ENCODE measurements at regions of chr10 and their contacts with region 1.

Region 1: DNA sequence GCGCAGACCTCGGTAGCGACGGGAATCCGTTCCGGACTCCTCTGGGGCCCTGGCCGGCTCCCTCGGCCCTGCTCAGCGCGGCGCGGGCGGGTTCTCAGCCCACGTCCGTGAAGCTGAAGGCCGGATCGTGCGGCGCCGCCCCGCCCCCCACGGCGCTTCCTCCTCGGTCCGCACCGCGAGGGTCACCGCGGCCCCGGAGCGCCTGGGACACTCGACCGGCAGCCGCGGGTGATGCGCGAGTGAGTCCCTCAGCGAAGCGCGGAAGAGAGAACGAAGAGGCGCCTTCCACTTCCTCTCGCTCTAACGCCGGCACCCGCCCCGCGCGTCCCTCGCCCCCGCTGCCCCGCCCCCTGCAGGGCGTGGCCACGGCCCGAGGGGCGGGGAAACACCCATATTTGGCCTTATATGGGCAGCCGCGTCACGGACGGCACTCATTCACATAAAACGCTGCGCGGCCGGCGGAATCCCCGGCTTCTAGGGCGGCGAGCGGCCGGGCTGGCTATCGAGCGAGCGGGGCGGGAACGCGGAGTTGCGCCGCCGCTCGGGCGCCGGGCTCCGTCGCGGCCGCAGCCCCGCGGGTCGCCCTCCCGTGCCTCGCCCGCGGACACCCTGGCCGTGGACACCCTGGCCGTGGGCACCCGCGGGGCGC is at the start of gene DUSP5:
- DNase-seq: peak; percentile 83 to 97
- H3K4me3 ChIP-seq: peak within 1 kb of the TSS; percentile 77
- H3K27ac ChIP-seq: peak within 1 kb of the TSS; percentile 89 to 93
- H3K4me1 ChIP-seq: peaks cover 0 to 22% of the 10 kb centered on the region in 2 donors
- H3K27me3 ChIP-seq: no peaks in the 10 kb centered on the region
- CTCF ChIP-seq: no peak
- total RNA-seq, gene DUSP5: 26.9 TPM

Region 2: DNA sequence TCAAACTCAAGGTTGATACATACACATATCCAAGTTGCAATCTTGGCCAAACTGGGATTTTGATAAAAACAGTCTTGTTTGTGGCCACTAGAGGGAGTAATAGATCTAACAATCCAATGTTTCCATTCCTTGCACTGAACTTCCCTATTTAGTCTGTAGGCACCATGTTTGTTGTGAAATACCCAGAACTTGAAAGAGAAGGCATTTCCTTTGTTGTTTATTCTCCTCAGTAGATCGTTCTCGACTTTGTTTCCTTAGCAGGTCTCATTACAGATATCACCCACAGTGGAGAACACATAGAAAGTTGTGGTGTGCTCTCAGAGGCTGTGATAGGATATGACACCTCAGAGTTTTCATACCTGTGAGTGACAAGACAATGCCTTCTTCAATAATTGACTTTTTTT is 360.4 kb before region 1 on chr10:
- intact Hi-C with region 1: loop called (anchors 5 kb)
- DNase-seq: no peak
- H3K4me3 ChIP-seq: no peak overlapping the region
- H3K27ac ChIP-seq: peak overlapping the region; percentile 38 to 53
- H3K4me1 ChIP-seq: peaks cover 0 to 15% of the 10 kb centered on the region in 2 donors
- H3K27me3 ChIP-seq: no peaks in the 10 kb centered on the region
- CTCF ChIP-seq: peak; percentile 72 to 86 (median 78)

Region 3: DNA sequence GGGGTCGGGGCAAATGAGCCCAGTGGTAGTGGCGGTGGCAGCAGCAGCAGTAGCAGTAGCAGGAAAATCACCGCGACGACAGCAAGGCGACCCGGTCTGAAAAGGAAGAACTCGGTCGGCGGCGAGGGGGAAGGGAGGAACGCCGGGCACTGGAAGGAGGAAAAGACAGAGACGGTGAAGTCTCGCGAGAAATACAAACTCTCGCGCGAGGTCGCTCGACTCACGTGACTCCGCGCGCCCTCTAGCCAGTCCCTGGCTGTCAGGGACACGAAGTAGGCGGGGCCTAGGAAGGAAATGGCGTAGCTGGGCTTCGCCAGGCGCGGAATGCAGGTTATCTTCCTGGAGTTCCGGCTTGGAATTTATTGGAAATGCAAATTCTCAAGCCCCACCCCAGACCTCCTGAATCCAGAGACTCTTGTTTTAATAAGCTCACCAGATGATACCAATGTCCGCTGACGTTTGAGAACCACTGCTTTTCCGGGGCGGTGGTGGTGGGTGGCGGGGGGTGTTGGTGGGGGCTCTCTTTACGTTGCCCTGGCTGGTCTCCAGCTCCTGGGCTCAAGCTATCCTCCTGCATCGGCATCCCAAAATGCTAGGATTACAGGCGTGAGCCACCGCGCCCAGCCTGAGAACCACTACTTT is 192.7 kb before region 1 on chr10 and contains the start of gene SMNDC1:
- intact Hi-C with region 1: loop called (anchors 2 kb)
- DNase-seq: peak; percentile 90 to 99
- H3K4me3 ChIP-seq: peak within 1 kb of the TSS; percentile 75 to 99
- H3K27ac ChIP-seq: peak within 1 kb of the TSS; percentile 95 to 96
- H3K4me1 ChIP-seq: peaks cover 5 to 36% of the 10 kb centered on the region in 2 donors
- H3K27me3 ChIP-seq: no peaks in the 10 kb centered on the region
- CTCF ChIP-seq: no peak
- total RNA-seq, gene SMNDC1: 6.9 TPM

Region 4: GRCh38 chr10:110567201-110568054 is 69.9 kb after region 1 on chr10 and contains the start of gene SMC3:
- intact Hi-C with region 1: loop called (anchors 5 kb)
- DNase-seq: peak; percentile 40 to 94
- H3K4me3 ChIP-seq: peak within 1 kb of the TSS; percentile 81 to 97
- H3K27ac ChIP-seq: peak within 1 kb of the TSS; percentile 84 to 85
- H3K4me1 ChIP-seq: peaks cover 0 to 10% of the 10 kb centered on the region in 2 donors
- H3K27me3 ChIP-seq: no peaks in the 10 kb centered on the region
- CTCF ChIP-seq: no peak
- total RNA-seq, gene SMC3: 14.8 TPM